Breast epithelium (tissue), 4 donors: ENCODE measurements at regions of chr5 and their contacts with region 1.

Region 1: GRCh38 chr5:135569755-135570452 is 8.9 kb downstream of the CXCL14 start:
- DNase-seq: no peak
- H3K4me3 ChIP-seq: no peak overlapping the region
- H3K27ac ChIP-seq: peak overlapping the region in 1 of 2 donors; percentile 7
- H3K4me1 ChIP-seq: no peaks in the 10 kb centered on the region
- H3K27me3 ChIP-seq: peaks cover 0 to 5% of the 10 kb centered on the region in 2 donors
- CTCF ChIP-seq: peak in 1 of 3 donors; percentile 17
- POLR2A ChIP-seq: no peak

Region 2: DNA sequence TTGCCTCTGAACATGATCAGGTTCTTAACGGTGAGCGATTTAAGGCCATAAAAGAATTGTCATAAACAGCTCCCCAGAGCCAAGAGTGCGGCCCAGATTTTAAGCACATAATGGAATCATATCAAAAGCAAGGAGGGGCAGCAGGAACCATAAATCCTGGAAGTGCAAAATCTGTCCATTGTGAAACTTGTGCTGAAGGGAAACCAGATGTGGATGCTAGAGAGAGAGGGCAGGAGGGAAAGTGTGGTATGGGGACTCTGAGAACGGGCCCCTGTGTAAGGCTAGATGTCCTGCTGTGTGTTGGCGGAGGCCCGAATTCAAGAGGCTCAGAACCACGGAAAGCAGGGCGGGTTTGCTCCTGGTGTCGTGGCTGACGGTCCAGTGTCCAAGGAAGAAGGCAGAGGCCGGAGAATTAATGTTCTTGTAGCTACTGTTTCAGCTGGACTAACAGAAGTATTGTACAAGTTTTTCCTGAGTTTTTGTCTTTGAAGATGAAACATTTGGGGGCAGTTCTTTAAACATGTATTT is 17.9 kb after region 1 on chr5:
- intact Hi-C with region 1: loop called (anchors 1 kb)
- DNase-seq: no peak
- H3K4me3 ChIP-seq: no peak overlapping the region
- H3K27ac ChIP-seq: no peak overlapping the region
- H3K4me1 ChIP-seq: no peaks in the 10 kb centered on the region
- H3K27me3 ChIP-seq: no peaks in the 10 kb centered on the region
- CTCF ChIP-seq: no peak
- POLR2A ChIP-seq: no peak

Region 3: GRCh38 chr5:136020383-136021015 is 450.6 kb after region 1 on chr5:
- intact Hi-C with region 1: no loop called
- DNase-seq: no peak
- H3K4me3 ChIP-seq: peak overlapping the region in 1 of 3 donors; percentile 2
- H3K27ac ChIP-seq: peak overlapping the region; percentile 23 to 59
- H3K4me1 ChIP-seq: no peaks in the 10 kb centered on the region
- H3K27me3 ChIP-seq: no peaks in the 10 kb centered on the region
- CTCF ChIP-seq: no peak
- POLR2A ChIP-seq: no peak